GM13976 (cell line): ENCODE measurements at regions of chr6 and their contacts with region 1.

Region 1: GRCh38 chr6:3124667-3125066 is 6.2 kb downstream of the BPHL start:
- DNase-seq: no peak
- CTCF ChIP-seq: no peak

Region 2: GRCh38 chr6:3251462-3252314 is 127.0 kb after region 1 on chr6:
- in situ Hi-C with region 1: loop called (anchors 5 kb)
- DNase-seq: peak; percentile 88
- CTCF ChIP-seq: peak; percentile 89